Natural killer cell (primary cell): ENCODE measurements at regions of chr2 and their contacts with region 1.

Region 1: GRCh38 chr2:152635635-152636298 is 81.5 kb downstream of the PRPF40A start:
- DNase-seq: peak; percentile 50 to 76
- ATAC-seq: peak; percentile 58 to 79 (median 78)
- H3K4me3 ChIP-seq: no peak overlapping the region
- H3K4me3 Mint-ChIP-seq: no peak overlapping the region
- H3K27ac ChIP-seq: no peak overlapping the region
- H3K27ac Mint-ChIP-seq: no peak overlapping the region
- H3K4me1 ChIP-seq: no peaks in the 10 kb centered on the region
- H3K4me1 Mint-ChIP-seq: no peaks in the 10 kb centered on the region
- H3K27me3 ChIP-seq: no peaks in the 10 kb centered on the region
- H3K27me3 Mint-ChIP-seq: no peaks in the 10 kb centered on the region
- CTCF ChIP-seq: peak; percentile 89

Region 2: GRCh38 chr2:152036611-152037469 is 598.9 kb before region 1 on chr2:
- intact Hi-C with region 1: loop called (anchors 1 kb)
- DNase-seq: peak in 1 of 2 donors; percentile 74
- ATAC-seq: peak in 2 of 3 donors; percentile 76 to 79
- H3K4me3 ChIP-seq: no peak overlapping the region
- H3K4me3 Mint-ChIP-seq: no peak overlapping the region
- H3K27ac ChIP-seq: no peak overlapping the region
- H3K27ac Mint-ChIP-seq: no peak overlapping the region
- H3K4me1 ChIP-seq: no peaks in the 10 kb centered on the region
- H3K4me1 Mint-ChIP-seq: no peaks in the 10 kb centered on the region
- H3K27me3 ChIP-seq: no peaks in the 10 kb centered on the region
- H3K27me3 Mint-ChIP-seq: peaks cover 0 to 6% of the 10 kb centered on the region in 2 donors
- CTCF ChIP-seq: peak; percentile 64

Region 3: DNA sequence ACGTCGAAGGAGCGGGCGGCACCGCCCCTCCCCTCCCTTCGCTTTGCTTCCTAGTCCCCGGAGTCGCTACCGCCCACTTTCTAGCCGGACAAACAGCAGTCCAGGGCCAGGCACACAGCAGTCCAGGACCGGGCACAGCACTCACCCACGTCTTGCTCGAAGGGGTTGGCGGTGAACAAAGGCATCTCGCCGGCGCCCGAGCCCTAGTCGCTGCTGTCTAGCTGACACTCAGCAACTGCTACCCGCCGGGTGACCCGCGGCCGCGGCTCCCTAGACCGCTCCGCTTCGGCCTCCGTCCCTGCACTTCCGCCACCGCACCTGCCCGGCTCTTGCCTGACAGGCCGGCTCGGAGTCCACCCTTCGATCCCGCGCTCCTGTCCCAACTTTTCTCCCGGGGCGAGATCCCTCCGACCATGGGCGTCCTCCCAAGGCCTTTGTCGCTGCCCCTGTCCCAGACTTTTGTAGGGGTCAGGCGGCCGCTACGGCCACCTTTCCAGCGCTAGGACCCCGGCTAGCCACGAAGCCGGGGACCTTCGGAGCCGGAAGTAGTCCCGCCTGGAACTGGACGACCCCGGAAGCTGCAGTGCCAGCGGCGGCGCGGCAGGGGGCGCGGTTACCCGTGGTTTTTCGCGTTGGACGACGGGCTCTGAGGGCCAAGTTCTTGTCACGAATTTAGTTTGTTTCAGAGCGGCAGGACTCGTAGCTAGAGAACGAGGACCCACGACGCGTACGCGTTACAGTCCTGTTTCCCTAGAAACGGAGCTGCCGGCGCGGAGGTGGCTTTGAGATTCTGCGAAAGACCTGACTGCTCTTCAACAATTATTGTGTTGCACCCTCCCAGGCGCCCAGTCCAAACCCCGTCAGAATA is 460.1 kb before region 1 on chr2 and contains the start of gene STAM2:
- intact Hi-C with region 1: loop called (anchors 1 kb)
- DNase-seq: peak; percentile 92 to 94
- ATAC-seq: peak; percentile 87 to 95 (median 88)
- H3K4me3 ChIP-seq: peak within 1 kb of the TSS; percentile 82
- H3K4me3 Mint-ChIP-seq: peak within 1 kb of the TSS; percentile 99
- H3K27ac ChIP-seq: peak within 1 kb of the TSS; percentile 94
- H3K27ac Mint-ChIP-seq: peak within 1 kb of the TSS; percentile 99 to 100
- H3K4me1 ChIP-seq: peaks cover 13% of the 10 kb centered on the region
- H3K4me1 Mint-ChIP-seq: peaks cover 43 to 48% of the 10 kb centered on the region in 2 donors
- H3K27me3 ChIP-seq: no peaks in the 10 kb centered on the region
- H3K27me3 Mint-ChIP-seq: peaks cover 9 to 12% of the 10 kb centered on the region in 2 donors
- CTCF ChIP-seq: peak; percentile 95
- total RNA-seq, gene STAM2: 18.7 to 23.1 (median 19.2) TPM

Region 4: GRCh38 chr2:152558158-152558984 is 77.4 kb before region 1 on chr2:
- intact Hi-C with region 1: loop called (anchors 5 kb)
- DNase-seq: no peak
- ATAC-seq: no peak
- H3K4me3 ChIP-seq: no peak overlapping the region
- H3K4me3 Mint-ChIP-seq: no peak overlapping the region
- H3K27ac ChIP-seq: no peak overlapping the region
- H3K27ac Mint-ChIP-seq: no peak overlapping the region
- H3K4me1 ChIP-seq: peaks cover 3% of the 10 kb centered on the region
- H3K4me1 Mint-ChIP-seq: no peaks in the 10 kb centered on the region
- H3K27me3 ChIP-seq: no peaks in the 10 kb centered on the region
- H3K27me3 Mint-ChIP-seq: peaks cover 0 to 5% of the 10 kb centered on the region in 2 donors
- CTCF ChIP-seq: no peak